ENCODE measurements at regions of chr6 and their contacts with region 1.

Region 1: DNA sequence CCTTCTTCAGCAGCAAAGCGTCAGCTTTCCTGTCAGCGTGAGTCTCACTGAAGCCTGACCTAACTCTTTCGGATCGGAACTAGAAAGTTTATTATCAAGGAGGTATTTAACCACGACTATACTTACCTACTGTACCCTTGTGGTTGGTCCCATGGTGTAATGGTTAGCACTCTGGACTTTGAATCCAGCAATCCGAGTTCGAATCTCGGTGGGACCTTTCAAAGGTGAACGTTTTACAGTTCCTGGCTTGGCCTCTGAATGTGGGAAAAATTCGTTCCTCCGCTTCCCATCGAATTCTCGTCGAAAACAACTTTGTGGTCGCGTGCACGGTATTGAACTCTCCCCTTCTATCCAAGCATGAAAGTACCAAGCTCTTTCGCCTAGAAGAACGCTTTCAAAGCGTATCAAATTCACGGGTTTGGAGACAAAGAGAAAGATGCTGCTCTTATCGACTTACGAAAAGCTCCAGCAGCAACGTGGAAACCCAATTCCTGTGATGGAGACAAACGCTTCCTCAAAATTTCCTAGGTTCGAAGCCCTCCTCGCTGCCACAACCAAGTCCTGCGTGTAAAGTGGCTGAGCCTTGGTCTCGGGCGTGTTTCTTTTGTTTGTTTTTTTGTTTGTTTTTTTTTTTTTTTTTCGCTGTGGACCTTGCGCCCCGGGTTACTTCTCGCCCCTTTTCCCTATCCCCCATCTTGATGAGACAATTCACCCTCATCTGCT is 63.7 kb downstream of the GPX5 start:
- DNase-seq: peak; percentile 61
- H3K27ac ChIP-seq: no peak overlapping the region
- CTCF ChIP-seq: no peak

Region 2: DNA sequence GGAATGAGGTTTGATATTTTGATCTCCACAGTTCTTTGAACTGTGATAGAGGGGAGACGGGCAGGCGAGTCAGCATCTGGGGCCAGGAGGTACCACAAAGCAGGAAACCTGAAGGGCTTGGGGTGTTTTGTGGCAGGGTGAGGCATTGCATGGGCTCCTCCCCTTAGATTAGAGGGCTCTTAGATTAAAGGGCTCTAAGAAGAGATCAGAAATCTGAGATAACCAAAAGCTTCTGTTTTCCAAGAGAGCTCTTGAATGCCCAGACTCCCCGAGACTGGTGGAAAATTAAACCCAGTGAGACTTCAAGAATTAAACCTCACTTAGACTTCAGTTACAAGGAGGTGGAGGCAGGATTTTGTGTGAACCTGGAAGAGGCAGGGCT is 66.2 kb before region 1 on chr6:
- CTCF ChIA-PET with region 1: no interaction called
- POLR2A ChIA-PET with region 1: no interaction called
- DNase-seq: no peak
- H3K27ac ChIP-seq: no peak overlapping the region
- CTCF ChIP-seq: no peak

Region 3: GRCh38 chr6:29563435-29563965 is 974.1 kb after region 1 on chr6:
- CTCF ChIA-PET with region 1: interaction called, 12 read pairs
- POLR2A ChIA-PET with region 1: no interaction called
- DNase-seq: no peak
- H3K27ac ChIP-seq: no peak overlapping the region
- CTCF ChIP-seq: no peak